ENCODE measurements at regions of chr10 and their contacts with region 1.

Region 1: GRCh38 chr10:12241810-12242529 is 46.0 kb downstream of the CDC123 start:
- DNase-seq: no peak
- H3K4me3 Mint-ChIP-seq: no peak overlapping the region
- H3K27ac Mint-ChIP-seq: no peak overlapping the region
- H3K4me1 Mint-ChIP-seq: peaks cover 19% of the 10 kb centered on the region
- H3K27me3 Mint-ChIP-seq: no peaks in the 10 kb centered on the region

Region 2: GRCh38 chr10:10942441-10942840 is 1299.5 kb before region 1 on chr10:
- CTCF ChIA-PET with region 1: no interaction called
- POLR2A ChIA-PET with region 1: interaction called, 10 read pairs
- DNase-seq: no peak
- H3K4me3 Mint-ChIP-seq: no peak overlapping the region
- H3K27ac Mint-ChIP-seq: no peak overlapping the region
- H3K4me1 Mint-ChIP-seq: no peaks in the 10 kb centered on the region
- H3K27me3 Mint-ChIP-seq: peaks cover 5% of the 10 kb centered on the region

Region 3: GRCh38 chr10:12077580-12078180 is 164.3 kb before region 1 on chr10:
- CTCF ChIA-PET with region 1: no interaction called
- POLR2A ChIA-PET with region 1: no interaction called
- DNase-seq: no peak
- H3K4me3 Mint-ChIP-seq: no peak overlapping the region
- H3K27ac Mint-ChIP-seq: no peak overlapping the region
- H3K4me1 Mint-ChIP-seq: peaks cover 12% of the 10 kb centered on the region
- H3K27me3 Mint-ChIP-seq: no peaks in the 10 kb centered on the region

Region 4: GRCh38 chr10:12201543-12201942 is 40.4 kb before region 1 on chr10:
- CTCF ChIA-PET with region 1: no interaction called
- POLR2A ChIA-PET with region 1: no interaction called
- DNase-seq: no peak
- H3K4me3 Mint-ChIP-seq: no peak overlapping the region
- H3K27ac Mint-ChIP-seq: peak overlapping the region; percentile 22
- H3K4me1 Mint-ChIP-seq: peaks cover 50% of the 10 kb centered on the region
- H3K27me3 Mint-ChIP-seq: no peaks in the 10 kb centered on the region